Activated CD4-positive, alpha-beta memory T cell treated with anti-CD3 and anti-CD28 coated beads for 36 hours (primary cell): ENCODE measurements at regions of chr20 and their contacts with region 1.

Region 1: GRCh38 chr20:57596998-57597939 is 23.0 kb downstream of the ZBP1 start:
- DNase-seq: peak; percentile 75
- H3K4me3 Mint-ChIP-seq: no peak overlapping the region
- H3K27ac Mint-ChIP-seq: no peak overlapping the region
- H3K4me1 Mint-ChIP-seq: peaks cover 2% of the 10 kb centered on the region
- H3K27me3 Mint-ChIP-seq: peaks cover 5% of the 10 kb centered on the region

Region 2: GRCh38 chr20:57498425-57499400 is 98.6 kb before region 1 on chr20:
- CTCF ChIA-PET with region 1: interaction called, 9 read pairs
- POLR2A ChIA-PET with region 1: no interaction called
- intact Hi-C with region 1: loop called (anchors 2 kb)
- DNase-seq: peak; percentile 63
- H3K4me3 Mint-ChIP-seq: no peak overlapping the region
- H3K27ac Mint-ChIP-seq: no peak overlapping the region
- H3K4me1 Mint-ChIP-seq: peaks cover 10% of the 10 kb centered on the region
- H3K27me3 Mint-ChIP-seq: peaks cover 26% of the 10 kb centered on the region

Region 3: GRCh38 chr20:57514273-57514751 is 83.0 kb before region 1 on chr20:
- CTCF ChIA-PET with region 1: interaction called, 10 read pairs
- POLR2A ChIA-PET with region 1: no interaction called
- intact Hi-C with region 1: loop called (anchors 2 kb)
- DNase-seq: peak; percentile 38
- H3K4me3 Mint-ChIP-seq: no peak overlapping the region
- H3K27ac Mint-ChIP-seq: no peak overlapping the region
- H3K4me1 Mint-ChIP-seq: no peaks in the 10 kb centered on the region
- H3K27me3 Mint-ChIP-seq: peaks cover 10% of the 10 kb centered on the region

Region 4: GRCh38 chr20:57654363-57654997 is 57.2 kb after region 1 on chr20:
- CTCF ChIA-PET with region 1: interaction called, 8 read pairs
- POLR2A ChIA-PET with region 1: no interaction called
- intact Hi-C with region 1: loop called (anchors 1 kb)
- DNase-seq: peak; percentile 66
- H3K4me3 Mint-ChIP-seq: no peak overlapping the region
- H3K27ac Mint-ChIP-seq: no peak overlapping the region
- H3K4me1 Mint-ChIP-seq: peaks cover 11% of the 10 kb centered on the region
- H3K27me3 Mint-ChIP-seq: no peaks in the 10 kb centered on the region

Region 5: GRCh38 chr20:57680131-57680716 is 83.0 kb after region 1 on chr20:
- CTCF ChIA-PET with region 1: interaction called, 13 read pairs
- POLR2A ChIA-PET with region 1: no interaction called
- intact Hi-C with region 1: no loop called
- DNase-seq: no peak
- H3K4me3 Mint-ChIP-seq: no peak overlapping the region
- H3K27ac Mint-ChIP-seq: no peak overlapping the region
- H3K4me1 Mint-ChIP-seq: peaks cover 15% of the 10 kb centered on the region
- H3K27me3 Mint-ChIP-seq: peaks cover 2% of the 10 kb centered on the region

Region 6: GRCh38 chr20:58179432-58180099 is 582.3 kb after region 1 on chr20:
- CTCF ChIA-PET with region 1: interaction called, 17 read pairs
- POLR2A ChIA-PET with region 1: no interaction called
- intact Hi-C with region 1: loop called (anchors 1 kb)
- DNase-seq: peak; percentile 70
- H3K4me3 Mint-ChIP-seq: no peak overlapping the region
- H3K27ac Mint-ChIP-seq: no peak overlapping the region
- H3K4me1 Mint-ChIP-seq: peaks cover 3% of the 10 kb centered on the region
- H3K27me3 Mint-ChIP-seq: peaks cover 13% of the 10 kb centered on the region

Region 7: GRCh38 chr20:58209652-58210397 is 612.6 kb after region 1 on chr20:
- CTCF ChIA-PET with region 1: interaction called, 18 read pairs
- POLR2A ChIA-PET with region 1: no interaction called
- intact Hi-C with region 1: loop called (anchors 5 kb)
- DNase-seq: peak; percentile 89
- H3K4me3 Mint-ChIP-seq: no peak overlapping the region
- H3K27ac Mint-ChIP-seq: no peak overlapping the region
- H3K4me1 Mint-ChIP-seq: no peaks in the 10 kb centered on the region
- H3K27me3 Mint-ChIP-seq: peaks cover 3% of the 10 kb centered on the region

Region 8: GRCh38 chr20:58246346-58246745 is 649.1 kb after region 1 on chr20:
- CTCF ChIA-PET with region 1: no interaction called
- POLR2A ChIA-PET with region 1: no interaction called
- intact Hi-C with region 1: no loop called
- DNase-seq: no peak
- H3K4me3 Mint-ChIP-seq: no peak overlapping the region
- H3K27ac Mint-ChIP-seq: no peak overlapping the region
- H3K4me1 Mint-ChIP-seq: no peaks in the 10 kb centered on the region
- H3K27me3 Mint-ChIP-seq: no peaks in the 10 kb centered on the region